Posterior vena cava (tissue), 2 donors: ENCODE measurements at regions of chr2 and their contacts with region 1.

Region 1: DNA sequence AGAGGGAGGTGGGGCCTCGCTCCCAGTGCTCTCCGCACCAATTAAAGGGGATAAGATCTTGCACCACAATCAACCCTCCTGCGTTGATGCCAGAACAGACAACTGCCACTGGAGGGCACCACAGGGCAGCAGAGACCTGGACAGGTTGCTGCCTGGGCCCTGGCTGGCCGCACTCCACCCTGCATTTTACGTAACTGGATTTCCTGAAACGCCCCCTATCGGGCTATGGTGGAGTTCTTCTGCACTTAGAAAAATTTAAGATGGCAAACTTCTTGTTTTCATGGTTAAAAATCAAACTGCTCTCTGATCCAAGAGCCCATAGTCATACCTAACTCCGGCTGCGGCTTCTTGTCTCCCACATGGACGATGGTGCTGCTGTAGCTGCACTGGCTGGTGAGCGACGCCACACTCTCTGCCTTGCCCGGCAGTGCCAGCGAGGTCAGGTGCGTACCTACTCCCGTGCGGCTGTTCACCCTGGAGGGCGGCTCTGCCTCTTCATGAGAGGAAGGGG is 16.8 kb upstream of the HES6 start:
- DNase-seq: peak; percentile 82

Region 2: DNA sequence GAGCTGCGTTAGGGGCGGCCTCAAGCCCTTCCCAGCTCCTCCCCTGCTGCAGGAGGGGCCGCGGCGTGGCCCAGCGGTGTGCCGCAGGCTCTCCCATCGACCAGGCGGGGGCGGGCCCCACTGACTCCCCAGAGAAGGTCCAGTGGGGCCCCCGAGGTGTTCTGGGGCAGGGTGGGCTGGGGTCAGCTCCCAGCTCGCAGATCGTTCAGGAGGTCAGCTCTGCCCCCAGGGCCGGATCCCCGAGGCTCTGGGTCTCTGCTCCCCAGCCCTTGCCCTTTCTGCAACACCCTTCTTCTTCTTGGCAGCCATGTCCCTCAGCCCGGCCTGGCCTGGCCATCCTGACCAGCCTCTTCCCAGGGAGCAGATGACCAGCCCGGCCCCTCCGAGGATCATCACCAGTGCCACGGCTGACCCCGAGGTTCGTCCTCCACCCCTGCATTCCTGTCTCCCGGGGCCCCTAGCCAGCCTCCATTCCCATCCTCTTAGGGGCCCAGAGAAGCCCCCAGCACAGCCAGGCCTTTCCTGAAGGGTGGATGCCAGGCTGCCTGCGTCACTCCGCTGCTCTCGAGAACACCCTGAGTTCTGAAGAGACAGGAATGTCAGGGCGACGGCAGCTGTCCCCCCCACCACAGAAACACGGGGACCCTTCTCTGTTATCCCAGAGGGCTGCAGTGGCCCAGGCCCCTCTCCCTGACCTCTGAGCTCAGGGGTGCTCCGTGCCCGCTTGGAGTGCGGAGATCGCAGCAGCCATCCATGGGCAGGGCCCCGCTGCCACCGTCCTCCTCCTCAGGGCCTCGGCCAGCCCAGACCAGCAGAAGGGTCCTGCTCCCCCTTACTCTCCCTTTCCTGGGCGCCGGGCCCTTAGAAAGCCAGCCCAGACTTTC is 129.1 kb before region 1 on chr2:
- intact Hi-C with region 1: loop called in 1 of 2 experiments (anchors 10 kb)
- DNase-seq: peak; percentile 89

Region 3: GRCh38 chr2:238216651-238217184 is 39.9 kb before region 1 on chr2:
- intact Hi-C with region 1: loop called in 1 of 2 experiments (anchors 1 kb)
- DNase-seq: no peak

Region 4: DNA sequence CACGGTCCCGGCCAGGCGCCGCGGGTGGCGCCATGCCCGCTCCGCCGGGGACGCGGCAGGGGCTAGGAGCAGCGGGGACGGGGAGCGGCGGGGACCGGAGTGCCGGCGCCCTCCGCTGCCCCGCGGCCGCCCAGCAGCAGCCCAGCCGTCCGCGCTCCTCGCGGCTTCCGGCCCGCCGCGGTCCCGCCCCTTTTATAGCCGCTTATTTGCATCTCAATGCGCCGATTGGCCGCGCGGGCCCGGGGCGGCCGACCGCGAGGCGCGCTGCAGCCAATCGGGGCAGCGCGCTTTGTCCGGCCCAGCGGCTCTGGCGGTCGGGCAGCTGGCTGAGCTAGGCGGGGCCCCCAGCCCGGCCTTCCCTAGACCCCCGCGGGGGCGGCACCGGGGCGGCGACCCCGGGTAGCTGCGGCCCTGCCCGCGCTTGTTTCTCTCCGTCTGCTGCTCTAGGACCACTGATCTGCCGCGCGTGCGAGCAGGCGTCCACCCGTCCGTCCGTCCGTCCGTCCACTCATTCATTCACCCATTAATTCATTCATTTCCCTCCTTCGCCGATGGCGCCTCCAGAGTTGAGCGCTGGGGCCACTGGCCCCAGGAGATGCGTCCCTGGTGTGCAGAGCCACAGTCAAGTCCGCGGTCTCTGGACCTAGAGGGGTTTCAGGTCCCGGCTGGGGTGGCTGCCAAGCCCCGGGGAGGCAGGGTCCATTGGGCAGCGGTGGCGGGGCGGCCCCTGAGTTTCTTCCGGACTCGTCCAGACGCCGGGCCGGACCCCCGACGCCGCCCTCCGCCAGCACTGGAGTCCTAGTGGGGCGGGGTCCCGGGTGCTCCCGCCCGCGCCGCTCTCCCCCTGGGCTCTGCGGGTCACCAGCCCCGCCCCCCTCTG is 16.5 kb before region 1 on chr2 and contains the start of gene HES6:
- intact Hi-C with region 1: no loop called
- DNase-seq: peak; percentile 96
- total RNA-seq, gene HES6: 2.3 to 6.9 TPM

Region 5: GRCh38 chr2:238970553-238971081 is 714.0 kb after region 1 on chr2:
- intact Hi-C with region 1: no loop called
- DNase-seq: no peak